Activated CD4-positive, alpha-beta memory T cell treated with anti-CD3 and anti-CD28 coated beads, Interleukin-2, amount 10 ng/mL, durations not matched to agents 7 days and 5 days (primary cell): ENCODE measurements at regions of chr19 and their contacts with region 1.

Region 1: GRCh38 chr19:16584248-16585141 is 12.3 kb upstream of the SLC35E1 start:
- DNase-seq: peak; percentile 93
- H3K4me3 Mint-ChIP-seq: peak overlapping the region; percentile 77
- H3K27ac Mint-ChIP-seq: peak overlapping the region; percentile 90
- H3K4me1 Mint-ChIP-seq: peaks cover 83% of the 10 kb centered on the region
- H3K27me3 Mint-ChIP-seq: no peaks in the 10 kb centered on the region

Region 2: DNA sequence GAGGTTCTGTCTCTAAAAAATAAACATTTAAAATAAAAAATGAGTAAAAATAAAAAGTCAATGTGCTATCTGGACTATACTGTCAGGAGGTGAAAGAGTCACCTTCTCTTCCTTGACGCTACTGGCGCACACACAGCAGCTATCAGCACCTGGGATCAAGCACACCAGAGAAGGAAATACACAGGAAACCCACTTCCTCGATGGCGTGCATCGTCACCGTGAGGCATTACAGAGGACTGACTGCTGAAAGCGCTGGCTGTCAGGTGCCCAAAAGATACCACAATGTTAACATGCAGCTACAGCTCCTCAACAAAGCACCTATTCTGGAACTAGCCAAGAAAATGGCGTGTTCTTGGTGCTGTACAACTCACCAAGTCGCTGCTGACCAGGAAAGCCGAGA is 18.3 kb before region 1 on chr19:
- CTCF ChIA-PET with region 1: interaction called, 3 read pairs
- POLR2A ChIA-PET with region 1: interaction called, 17 read pairs
- DNase-seq: peak; percentile 91
- H3K4me3 Mint-ChIP-seq: peak overlapping the region; percentile 62
- H3K27ac Mint-ChIP-seq: peak overlapping the region; percentile 100
- H3K4me1 Mint-ChIP-seq: peaks cover 61% of the 10 kb centered on the region
- H3K27me3 Mint-ChIP-seq: no peaks in the 10 kb centered on the region

Region 3: GRCh38 chr19:16572332-16573211 is 11.9 kb before region 1 on chr19 and contains the start of gene SLC35E1:
- CTCF ChIA-PET with region 1: interaction called, 13 read pairs
- POLR2A ChIA-PET with region 1: interaction called, 32 read pairs
- DNase-seq: peak; percentile 93
- H3K4me3 Mint-ChIP-seq: peak within 1 kb of the TSS; percentile 93
- H3K27ac Mint-ChIP-seq: peak within 1 kb of the TSS; percentile 90
- H3K4me1 Mint-ChIP-seq: peaks cover 68% of the 10 kb centered on the region
- H3K27me3 Mint-ChIP-seq: no peaks in the 10 kb centered on the region
- total RNA-seq, gene SLC35E1: 57.3 to 57.7 TPM